ENCODE measurements at regions of chr9 and their contacts with region 1.

Region 1: DNA sequence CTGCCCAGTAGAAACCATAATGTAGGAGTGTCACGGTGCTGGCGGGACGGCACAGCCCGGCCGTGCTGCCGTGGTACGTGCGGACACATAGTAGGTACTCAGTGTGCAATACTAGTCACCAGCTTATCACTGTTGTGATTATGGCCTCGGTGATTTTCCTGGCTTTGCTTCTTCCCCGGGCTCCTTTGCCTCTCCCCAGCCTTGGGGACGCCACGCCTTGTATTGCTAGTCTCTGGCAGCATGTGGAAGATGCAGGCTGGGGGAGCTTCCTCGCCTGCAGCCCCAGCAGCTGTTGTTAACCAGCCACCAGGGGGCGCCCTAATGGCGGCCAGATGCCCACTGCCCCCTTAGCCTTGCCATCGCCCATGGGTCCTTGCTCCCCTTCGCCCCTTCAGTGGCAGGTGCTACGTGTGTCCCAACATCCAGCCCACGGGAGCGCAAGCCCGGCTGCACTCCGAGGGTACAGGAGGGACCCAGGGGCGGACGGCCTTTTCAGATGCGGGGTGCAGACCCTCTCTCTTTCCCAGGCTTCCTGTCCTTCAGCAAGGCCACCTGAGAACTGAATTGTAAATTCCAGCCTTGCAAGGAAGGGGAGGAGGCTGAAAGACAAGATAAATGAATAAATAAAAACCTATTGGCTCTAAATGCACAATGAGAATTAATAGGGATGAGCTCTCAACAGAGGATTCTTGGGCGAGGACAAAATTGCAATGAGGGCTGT is 8.0 kb downstream of the NTNG2 start:
- DNase-seq: peak; percentile 73 to 86 (median 80)
- ATAC-seq: peak; percentile 89
- H3K4me3 ChIP-seq: no peak overlapping the region
- H3K27ac ChIP-seq: no peak overlapping the region
- H3K4me1 ChIP-seq: peaks cover 0 to 11% of the 10 kb centered on the region in 2 experiments; a peak in 1 of 5 replicates
- H3K27me3 ChIP-seq: peaks cover 26 to 69% of the 10 kb centered on the region in 2 experiments
- CTCF ChIP-seq: peak; percentile 78 to 90 (median 89)
- EP300 ChIP-seq: no peak
- POLR2A ChIP-seq: no peak
- RAD21 ChIP-seq: peak; percentile 49 to 76

Region 2: GRCh38 chr9:132235946-132236661 is 66.3 kb after region 1 on chr9:
- CTCF ChIA-PET with region 1: interaction called, 7 read pairs
- POLR2A ChIA-PET with region 1: interaction called, 4 read pairs
- in situ Hi-C with region 1: no loop called
- intact Hi-C with region 1: loop called (anchors 1 kb)
- DNase-seq: peak; percentile 80 to 84 (median 82)
- ATAC-seq: peak; percentile 61
- H3K4me3 ChIP-seq: no peak overlapping the region
- H3K27ac ChIP-seq: no peak overlapping the region
- H3K4me1 ChIP-seq: peaks cover 0 to 32% of the 10 kb centered on the region in 2 experiments; a peak in 2 of 5 replicates
- H3K27me3 ChIP-seq: peaks cover 18 to 79% of the 10 kb centered on the region in 2 experiments; a peak in 4 of 5 replicates
- CTCF ChIP-seq: peak; percentile 89 to 97 (median 95)
- EP300 ChIP-seq: no peak
- POLR2A ChIP-seq: no peak
- RAD21 ChIP-seq: peak; percentile 67 to 88

Region 3: GRCh38 chr9:132250324-132251262 is 80.8 kb after region 1 on chr9:
- CTCF ChIA-PET with region 1: interaction called, 3 read pairs
- POLR2A ChIA-PET with region 1: interaction called, 3 read pairs
- in situ Hi-C with region 1: no loop called
- intact Hi-C with region 1: loop called (anchors 5 kb)
- DNase-seq: no peak
- ATAC-seq: no peak; the same call in 2 of the 3 replicates
- H3K4me3 ChIP-seq: no peak overlapping the region
- H3K27ac ChIP-seq: no peak overlapping the region
- H3K4me1 ChIP-seq: peaks cover 0 to 7% of the 10 kb centered on the region in 2 experiments; a peak in 2 of 5 replicates
- H3K27me3 ChIP-seq: peaks cover 7 to 38% of the 10 kb centered on the region in 2 experiments; a peak in 4 of 5 replicates
- CTCF ChIP-seq: no peak
- EP300 ChIP-seq: no peak
- POLR2A ChIP-seq: no peak
- RAD21 ChIP-seq: no peak

Region 4: DNA sequence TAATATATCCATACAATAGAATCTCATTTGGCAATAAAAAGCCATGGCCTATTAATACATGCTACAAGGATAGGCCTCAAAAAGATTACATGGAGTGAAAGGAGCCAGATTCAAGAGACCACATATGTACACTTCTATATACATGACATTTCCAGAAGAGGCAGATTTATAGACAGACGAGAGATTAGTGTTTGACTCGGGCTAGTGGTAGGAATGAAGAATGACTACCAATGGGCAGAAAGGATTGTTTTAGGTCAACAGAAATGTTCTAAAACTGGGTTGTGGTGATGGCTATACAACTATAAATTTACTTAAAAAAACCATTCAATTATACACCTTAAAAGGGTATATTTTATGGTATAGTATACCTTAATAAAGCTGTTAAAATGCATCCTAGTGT is 143.0 kb after region 1 on chr9:
- CTCF ChIA-PET with region 1: no interaction called
- POLR2A ChIA-PET with region 1: no interaction called
- in situ Hi-C with region 1: no loop called
- intact Hi-C with region 1: no loop called
- DNase-seq: peak in 1 of 4 experiments; percentile 22
- ATAC-seq: 0 out of 3 replicates have a peak, but pooled peaks have one; percentile 42
- H3K4me3 ChIP-seq: no peak overlapping the region
- H3K27ac ChIP-seq: no peak overlapping the region
- H3K4me1 ChIP-seq: no peaks in the 10 kb centered on the region
- H3K27me3 ChIP-seq: no peaks in the 10 kb centered on the region
- CTCF ChIP-seq: no peak
- EP300 ChIP-seq: no peak
- POLR2A ChIP-seq: no peak
- RAD21 ChIP-seq: no peak

Region 5: GRCh38 chr9:132575005-132575609 is 405.3 kb after region 1 on chr9:
- CTCF ChIA-PET with region 1: no interaction called
- POLR2A ChIA-PET with region 1: no interaction called
- in situ Hi-C with region 1: no loop called
- intact Hi-C with region 1: loop called (anchors 5 kb)
- DNase-seq: peak; percentile 74 to 85 (median 81)
- ATAC-seq: peak; percentile 97
- H3K4me3 ChIP-seq: no peak overlapping the region
- H3K27ac ChIP-seq: no peak overlapping the region
- H3K4me1 ChIP-seq: no peaks in the 10 kb centered on the region; a peak in 1 of 5 replicates
- H3K27me3 ChIP-seq: peaks cover 4 to 62% of the 10 kb centered on the region in 2 experiments; a peak in 3 of 5 replicates
- CTCF ChIP-seq: peak; percentile 85 to 86 (median 86)
- EP300 ChIP-seq: no peak
- POLR2A ChIP-seq: no peak
- RAD21 ChIP-seq: peak; percentile 75 to 90

Measured in K562 (cell line).